GM12878 (cell line): ENCODE measurements at regions of chr2 and their contacts with region 1.

Region 1: DNA sequence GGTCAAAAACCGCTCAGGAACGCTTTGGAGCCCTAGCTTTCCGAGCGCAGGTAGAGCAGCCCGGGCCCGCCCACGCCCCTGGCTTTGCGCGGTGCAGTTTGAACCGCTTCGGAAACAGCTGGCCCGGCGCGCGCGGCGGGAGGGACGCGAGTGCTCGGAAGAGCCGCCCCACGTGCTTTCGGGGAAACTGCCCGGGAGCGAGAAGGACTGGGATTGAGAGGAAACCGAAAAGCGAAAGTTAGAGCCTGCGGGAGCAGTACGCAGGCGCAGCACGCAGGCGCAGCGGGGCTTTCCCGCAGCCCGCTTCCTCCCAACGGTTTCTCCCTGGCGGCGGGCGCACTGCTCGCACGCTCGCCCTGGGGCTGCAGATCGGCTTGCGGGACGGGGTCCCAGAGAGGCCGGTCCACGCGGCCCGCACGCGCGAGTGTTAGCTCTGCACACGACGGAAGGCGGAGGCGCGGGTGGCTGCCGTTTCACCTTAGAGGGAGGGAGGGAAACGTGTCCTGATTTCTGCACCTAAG is 6.3 kb upstream of the STAT1 start:
- DNase-seq: peak; percentile 93
- ATAC-seq: peak; percentile 80
- H3K4me3 ChIP-seq: peak overlapping the region; percentile 69
- H3K27ac ChIP-seq: peak overlapping the region; percentile 100
- H3K4me1 ChIP-seq: peaks cover 48% of the 10 kb centered on the region
- H3K27me3 ChIP-seq: no peaks in the 10 kb centered on the region
- CTCF ChIP-seq: no peak
- EP300 ChIP-seq: peak; percentile 97 to 100
- POLR2A ChIP-seq: peak; percentile 97
- RAD21 ChIP-seq: no peak

Region 2: GRCh38 chr2:190880378-190881073 is 139.8 kb before region 1 on chr2 and contains the start of gene GLS:
- CTCF ChIA-PET with region 1: no interaction called
- POLR2A ChIA-PET with region 1: interaction called, 28 read pairs
- RAD21 ChIA-PET with region 1: interaction called, 18 read pairs
- SMC1A ChIA-PET with region 1: interaction called, 12 read pairs
- in situ Hi-C with region 1: no loop called
- intact Hi-C with region 1: no loop called
- DNase-seq: peak; percentile 86
- ATAC-seq: peak; percentile 83
- H3K4me3 ChIP-seq: peak within 1 kb of the TSS; percentile 94
- H3K27ac ChIP-seq: peak within 1 kb of the TSS; percentile 95
- H3K4me1 ChIP-seq: peaks cover 6% of the 10 kb centered on the region; the same call in 1 of the 2 replicates
- H3K27me3 ChIP-seq: no peaks in the 10 kb centered on the region
- CTCF ChIP-seq: no peak
- EP300 ChIP-seq: 0 out of 4 replicates have a peak, but pooled peaks of 1 of the 2 experiments have one; percentile 20
- POLR2A ChIP-seq: peak; percentile 99
- RAD21 ChIP-seq: no peak
- polyA plus RNA-seq, gene GLS: 23.7 to 30.5 TPM

Region 3: GRCh38 chr2:190976521-190976920 is 43.8 kb before region 1 on chr2:
- CTCF ChIA-PET with region 1: no interaction called
- POLR2A ChIA-PET with region 1: no interaction called
- RAD21 ChIA-PET with region 1: no interaction called
- SMC1A ChIA-PET with region 1: no interaction called
- in situ Hi-C with region 1: no loop called
- intact Hi-C with region 1: no loop called
- DNase-seq: no peak
- ATAC-seq: no peak
- H3K4me3 ChIP-seq: no peak overlapping the region
- H3K27ac ChIP-seq: no peak overlapping the region
- H3K4me1 ChIP-seq: no peaks in the 10 kb centered on the region
- H3K27me3 ChIP-seq: no peaks in the 10 kb centered on the region
- CTCF ChIP-seq: no peak
- EP300 ChIP-seq: no peak
- POLR2A ChIP-seq: peak; percentile 49
- RAD21 ChIP-seq: no peak

Region 4: DNA sequence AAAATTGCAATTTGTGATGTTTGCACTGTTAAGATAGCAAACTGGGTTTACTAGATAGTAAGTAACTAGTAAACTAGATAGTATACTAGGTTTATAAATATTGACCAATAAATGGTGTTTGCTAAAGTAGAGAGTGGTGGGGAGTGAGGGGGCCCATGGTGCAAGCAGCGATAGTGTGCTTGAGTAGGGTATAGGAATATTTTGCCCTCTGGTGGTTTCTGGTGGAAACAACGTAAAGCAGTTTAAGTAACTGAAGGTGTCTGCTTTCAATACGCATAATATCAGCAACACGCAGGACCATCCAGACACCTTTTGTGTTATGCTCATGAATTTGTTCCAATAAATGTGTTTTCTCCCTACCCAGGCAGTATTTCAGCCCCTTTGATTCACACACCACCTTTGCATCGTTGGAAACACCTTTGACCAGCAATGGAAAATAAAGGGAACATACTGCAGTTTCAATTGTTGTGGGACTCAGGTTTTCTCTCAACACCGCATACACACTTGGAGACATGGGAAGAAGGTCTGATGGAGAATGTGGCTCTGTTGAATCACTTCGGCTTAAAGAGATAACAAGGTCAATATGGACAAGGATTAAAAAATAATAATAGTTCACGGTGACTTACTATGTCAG is 10.4 kb after region 1 on chr2:
- CTCF ChIA-PET with region 1: interaction called, 5 read pairs
- POLR2A ChIA-PET with region 1: interaction called, 75 read pairs
- RAD21 ChIA-PET with region 1: interaction called, 10 read pairs
- SMC1A ChIA-PET with region 1: interaction called, 3 read pairs
- in situ Hi-C with region 1: no loop called
- intact Hi-C with region 1: no loop called
- DNase-seq: no peak
- ATAC-seq: peak; percentile 96
- H3K4me3 ChIP-seq: no peak overlapping the region
- H3K27ac ChIP-seq: no peak overlapping the region
- H3K4me1 ChIP-seq: no peaks in the 10 kb centered on the region
- H3K27me3 ChIP-seq: no peaks in the 10 kb centered on the region
- CTCF ChIP-seq: peak; percentile 62 to 73 (median 69)
- EP300 ChIP-seq: no peak
- POLR2A ChIP-seq: no peak
- RAD21 ChIP-seq: peak; percentile 65

Region 5: GRCh38 chr2:191109888-191110287 is 89.6 kb after region 1 on chr2:
- CTCF ChIA-PET with region 1: no interaction called
- POLR2A ChIA-PET with region 1: no interaction called
- RAD21 ChIA-PET with region 1: no interaction called
- SMC1A ChIA-PET with region 1: no interaction called
- in situ Hi-C with region 1: no loop called
- intact Hi-C with region 1: no loop called
- DNase-seq: no peak
- ATAC-seq: peak; percentile 53
- H3K4me3 ChIP-seq: no peak overlapping the region
- H3K27ac ChIP-seq: no peak overlapping the region
- H3K4me1 ChIP-seq: peaks cover 25% of the 10 kb centered on the region
- H3K27me3 ChIP-seq: no peaks in the 10 kb centered on the region; a peak in 1 of 4 replicates
- CTCF ChIP-seq: no peak
- EP300 ChIP-seq: no peak
- POLR2A ChIP-seq: no peak
- RAD21 ChIP-seq: no peak

Region 6: DNA sequence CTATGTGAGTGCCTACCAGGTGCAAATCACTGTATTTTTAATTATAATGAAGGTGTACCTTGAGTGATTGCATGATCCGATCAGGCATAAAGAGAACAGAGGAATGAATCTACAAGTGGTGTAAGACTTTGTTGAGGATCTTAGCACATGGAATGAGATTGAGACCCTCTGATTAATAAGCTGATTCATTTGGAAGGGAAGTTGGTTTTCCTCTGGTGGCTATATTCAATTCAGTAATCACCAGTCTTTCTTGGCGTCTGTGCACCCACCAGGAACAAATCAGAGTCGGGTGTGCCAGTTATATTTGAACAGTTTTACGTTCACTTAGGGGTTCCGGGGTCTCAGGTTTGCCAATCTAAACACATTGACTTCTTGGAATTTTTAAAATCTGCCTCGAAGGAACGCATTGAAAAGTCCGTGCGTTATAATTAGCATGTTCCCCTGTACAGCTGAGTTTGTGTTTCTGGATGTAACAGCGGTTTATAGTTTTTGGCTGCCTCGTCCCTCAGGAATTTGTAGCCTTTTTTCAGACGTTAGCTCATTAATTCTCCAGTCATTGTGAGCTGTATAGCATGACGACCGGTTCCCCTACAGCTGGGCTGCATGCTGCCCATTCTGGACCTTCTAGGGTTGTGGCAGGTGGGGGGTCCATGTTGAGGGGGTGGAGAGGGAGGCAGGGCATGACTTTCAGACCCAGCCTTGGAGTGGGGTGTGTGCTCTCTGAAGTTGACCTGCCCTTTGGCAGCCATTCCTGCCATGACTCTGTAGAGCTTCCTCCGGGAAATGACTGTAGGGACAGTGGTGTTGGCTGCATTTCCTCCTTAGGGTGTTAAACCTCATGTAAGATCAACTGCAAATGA is 245.3 kb after region 1 on chr2:
- CTCF ChIA-PET with region 1: no interaction called
- POLR2A ChIA-PET with region 1: no interaction called
- RAD21 ChIA-PET with region 1: no interaction called
- SMC1A ChIA-PET with region 1: no interaction called
- in situ Hi-C with region 1: no loop called
- intact Hi-C with region 1: no loop called
- DNase-seq: no peak
- ATAC-seq: no peak
- H3K4me3 ChIP-seq: no peak overlapping the region
- H3K27ac ChIP-seq: no peak overlapping the region
- H3K4me1 ChIP-seq: no peaks in the 10 kb centered on the region
- H3K27me3 ChIP-seq: peaks cover 0 to 3% of the 10 kb centered on the region in 2 experiments; a peak in 2 of 4 replicates
- CTCF ChIP-seq: no peak
- EP300 ChIP-seq: no peak
- POLR2A ChIP-seq: no peak
- RAD21 ChIP-seq: no peak